ENCODE measurements at regions of chr1 and their contacts with region 1.

Region 1: GRCh38 chr1:185373813-185374529 is 56.9 kb upstream of the IVNS1ABP start:
- DNase-seq: peak; percentile 93
- H3K4me3 ChIP-seq: peak overlapping the region in 1 of 3 experiments; percentile 55
- H3K27ac ChIP-seq: peak overlapping the region; percentile 97
- H3K4me1 ChIP-seq: peaks cover 48% of the 10 kb centered on the region
- H3K27me3 ChIP-seq: no peaks in the 10 kb centered on the region
- CTCF ChIP-seq: no peak
- POLR2A ChIP-seq: no peak

Region 2: DNA sequence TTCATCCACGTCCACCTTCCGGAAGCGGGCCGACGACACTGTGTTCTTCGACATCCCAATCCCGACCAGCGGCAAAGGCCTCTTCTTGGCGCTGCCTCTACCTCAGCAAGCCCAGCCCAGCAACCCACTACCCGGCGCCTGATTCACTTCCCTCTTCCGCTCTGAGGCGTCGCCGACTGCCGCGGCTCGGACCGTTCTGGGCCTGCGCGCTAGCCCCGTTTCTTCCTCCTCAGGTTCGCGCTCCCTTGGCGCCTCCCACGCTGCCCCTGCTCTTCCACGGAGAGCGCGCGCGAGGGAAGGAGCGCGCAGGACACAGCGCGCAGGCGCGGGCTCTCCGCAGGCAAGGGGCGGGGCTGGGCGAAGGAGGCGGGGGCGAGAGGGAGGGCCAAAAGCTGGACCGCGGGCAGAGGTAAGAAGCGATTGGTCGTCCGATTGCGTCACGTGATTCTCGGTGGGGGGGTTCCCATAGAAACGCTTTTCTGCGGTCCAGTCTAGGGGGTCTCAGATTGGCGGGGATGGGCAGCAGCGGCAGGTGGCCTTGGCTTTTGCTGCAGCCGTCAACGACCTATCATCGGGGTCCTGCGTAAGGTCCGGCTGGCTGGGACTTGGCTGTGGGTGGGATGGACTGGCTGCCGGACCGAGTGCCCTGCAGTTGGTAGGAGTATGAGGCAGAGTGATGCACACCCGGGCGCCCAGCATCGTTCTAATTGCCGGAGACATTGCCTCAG is 1738.2 kb before region 1 on chr1 and contains the start of gene ARPC5:
- CTCF ChIA-PET with region 1: no interaction called
- POLR2A ChIA-PET with region 1: no interaction called
- dilution Hi-C with region 1: no loop called
- intact Hi-C with region 1: loop called (anchors 10 kb)
- DNase-seq: peak; percentile 100
- H3K4me3 ChIP-seq: peak within 1 kb of the TSS; percentile 93 to 100 (median 99)
- H3K27ac ChIP-seq: peak within 1 kb of the TSS; percentile 67
- H3K4me1 ChIP-seq: peaks cover 28% of the 10 kb centered on the region
- H3K27me3 ChIP-seq: no peaks in the 10 kb centered on the region
- CTCF ChIP-seq: no peak
- POLR2A ChIP-seq: peak; percentile 95
- total RNA-seq, gene ARPC5: 185 and 190 TPM in 2 replicates

Region 3: GRCh38 chr1:185044981-185045813 is 328.8 kb before region 1 on chr1 and contains the start of gene RNF2:
- CTCF ChIA-PET with region 1: no interaction called
- POLR2A ChIA-PET with region 1: no interaction called
- dilution Hi-C with region 1: no loop called
- intact Hi-C with region 1: loop called (anchors 5 kb)
- DNase-seq: peak; percentile 86
- H3K4me3 ChIP-seq: peak within 1 kb of the TSS; percentile 71 to 96 (median 74)
- H3K27ac ChIP-seq: peak within 1 kb of the TSS; percentile 9
- H3K4me1 ChIP-seq: peaks cover 12% of the 10 kb centered on the region
- H3K27me3 ChIP-seq: no peaks in the 10 kb centered on the region
- CTCF ChIP-seq: no peak
- POLR2A ChIP-seq: peak; percentile 59
- total RNA-seq, gene RNF2: 26.0 and 30.6 TPM in 2 replicates

Region 4: DNA sequence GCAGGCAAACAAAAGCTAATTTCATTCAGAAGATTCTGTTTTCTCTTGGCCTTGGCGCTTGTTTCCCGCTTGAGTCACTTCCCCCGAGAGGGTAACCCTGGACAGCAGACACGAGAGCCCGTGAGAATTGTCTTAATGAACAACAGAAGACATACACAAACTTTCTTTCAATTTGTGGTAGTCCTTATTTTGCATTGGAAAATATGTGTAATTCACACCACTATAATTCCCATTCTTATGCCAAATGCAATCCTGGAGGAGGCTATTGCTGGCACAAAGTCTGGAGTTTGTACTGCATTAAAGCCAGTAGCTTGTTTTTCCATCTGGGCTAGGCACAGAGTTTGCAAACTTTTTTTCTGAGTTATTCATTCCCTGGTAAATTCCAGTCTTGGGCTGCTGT is 52.9 kb after region 1 on chr1:
- CTCF ChIA-PET with region 1: no interaction called
- POLR2A ChIA-PET with region 1: no interaction called
- dilution Hi-C with region 1: no loop called
- intact Hi-C with region 1: loop called (anchors 1 kb)
- DNase-seq: peak; percentile 92
- H3K4me3 ChIP-seq: no peak overlapping the region
- H3K27ac ChIP-seq: peak overlapping the region; percentile 87
- H3K4me1 ChIP-seq: peaks cover 18% of the 10 kb centered on the region
- H3K27me3 ChIP-seq: no peaks in the 10 kb centered on the region
- CTCF ChIP-seq: no peak
- POLR2A ChIP-seq: no peak

Region 5: GRCh38 chr1:185559684-185560331 is 185.8 kb after region 1 on chr1:
- CTCF ChIA-PET with region 1: no interaction called
- POLR2A ChIA-PET with region 1: no interaction called
- dilution Hi-C with region 1: no loop called
- intact Hi-C with region 1: no loop called
- DNase-seq: peak; percentile 51
- H3K4me3 ChIP-seq: no peak overlapping the region
- H3K27ac ChIP-seq: no peak overlapping the region
- H3K4me1 ChIP-seq: no peaks in the 10 kb centered on the region
- H3K27me3 ChIP-seq: no peaks in the 10 kb centered on the region
- CTCF ChIP-seq: peak; percentile 22 to 46
- POLR2A ChIP-seq: no peak

Region 6: GRCh38 chr1:185646202-185646683 is 272.3 kb after region 1 on chr1:
- CTCF ChIA-PET with region 1: no interaction called
- POLR2A ChIA-PET with region 1: no interaction called
- dilution Hi-C with region 1: no loop called
- intact Hi-C with region 1: loop called (anchors 2 kb)
- DNase-seq: peak; percentile 99
- H3K4me3 ChIP-seq: peak overlapping the region in 1 of 3 experiments; percentile 27
- H3K27ac ChIP-seq: peak overlapping the region; percentile 72
- H3K4me1 ChIP-seq: peaks cover 23% of the 10 kb centered on the region
- H3K27me3 ChIP-seq: no peaks in the 10 kb centered on the region
- CTCF ChIP-seq: no peak
- POLR2A ChIP-seq: no peak